IMR-90 (cell line): ENCODE measurements at regions of chr7 and their contacts with region 1.

Region 1: GRCh38 chr7:125061776-125062397 is 132.3 kb upstream of the POT1 start:
- DNase-seq: peak; percentile 41
- ATAC-seq: peak; percentile 29; the same call in 1 of the 2 replicates
- H3K4me3 ChIP-seq: no peak overlapping the region
- H3K27ac ChIP-seq: no peak overlapping the region
- H3K4me1 ChIP-seq: peaks cover 5% of the 10 kb centered on the region; the same call in 1 of the 2 replicates
- H3K27me3 ChIP-seq: no peaks in the 10 kb centered on the region
- CTCF ChIP-seq: no peak
- POLR2A ChIP-seq: no peak
- RAD21 ChIP-seq: no peak

Region 2: DNA sequence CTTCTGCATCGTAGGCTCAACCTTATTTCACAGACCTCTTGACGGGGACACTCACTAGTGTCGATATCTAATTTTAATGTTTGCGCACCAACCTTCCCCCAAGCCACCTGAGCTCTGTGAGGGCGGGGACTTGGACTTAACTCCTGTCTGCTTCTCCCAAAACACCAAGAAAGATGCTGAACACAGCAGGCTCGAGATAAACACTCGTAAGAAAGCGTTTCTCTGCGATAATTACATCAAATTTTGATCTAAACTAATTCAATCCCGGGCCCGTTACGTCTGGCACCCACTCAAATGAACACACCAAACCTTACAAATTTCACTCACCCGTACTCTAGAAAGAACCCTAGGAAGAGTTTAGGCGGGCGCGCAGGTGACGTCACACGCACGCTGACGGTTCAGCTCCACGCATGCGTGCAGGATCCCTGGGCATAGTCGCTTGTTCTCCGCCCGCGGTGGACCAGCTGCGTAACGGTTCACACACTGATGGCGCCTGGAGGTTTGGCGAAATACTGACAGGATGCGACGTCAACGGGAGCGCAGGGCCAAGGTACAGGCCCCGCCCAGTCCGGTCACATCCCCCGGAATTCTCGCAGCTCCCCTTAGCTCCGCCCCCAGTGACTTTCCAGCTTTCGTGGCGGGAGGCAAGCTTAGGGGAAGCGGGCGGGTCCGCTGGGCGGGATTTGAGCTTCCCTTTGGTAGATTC is 132.3 kb before region 1 on chr7 and contains the start of gene POT1:
- CTCF ChIA-PET with region 1: interaction called, 3 read pairs
- POLR2A ChIA-PET with region 1: no interaction called
- dilution Hi-C with region 1: no loop called
- in situ Hi-C with region 1: no loop called
- intact Hi-C with region 1: loop called (anchors 1 kb)
- DNase-seq: peak; percentile 100
- ATAC-seq: peak; percentile 100
- H3K4me3 ChIP-seq: peak within 1 kb of the TSS; percentile 79
- H3K27ac ChIP-seq: peak within 1 kb of the TSS; percentile 56
- H3K4me1 ChIP-seq: no peaks in the 10 kb centered on the region
- H3K27me3 ChIP-seq: no peaks in the 10 kb centered on the region
- CTCF ChIP-seq: no peak
- POLR2A ChIP-seq: peak; percentile 67
- RAD21 ChIP-seq: no peak
- total RNA-seq, gene POT1: 28.5 and 30.6 TPM in 2 replicates

Region 3: DNA sequence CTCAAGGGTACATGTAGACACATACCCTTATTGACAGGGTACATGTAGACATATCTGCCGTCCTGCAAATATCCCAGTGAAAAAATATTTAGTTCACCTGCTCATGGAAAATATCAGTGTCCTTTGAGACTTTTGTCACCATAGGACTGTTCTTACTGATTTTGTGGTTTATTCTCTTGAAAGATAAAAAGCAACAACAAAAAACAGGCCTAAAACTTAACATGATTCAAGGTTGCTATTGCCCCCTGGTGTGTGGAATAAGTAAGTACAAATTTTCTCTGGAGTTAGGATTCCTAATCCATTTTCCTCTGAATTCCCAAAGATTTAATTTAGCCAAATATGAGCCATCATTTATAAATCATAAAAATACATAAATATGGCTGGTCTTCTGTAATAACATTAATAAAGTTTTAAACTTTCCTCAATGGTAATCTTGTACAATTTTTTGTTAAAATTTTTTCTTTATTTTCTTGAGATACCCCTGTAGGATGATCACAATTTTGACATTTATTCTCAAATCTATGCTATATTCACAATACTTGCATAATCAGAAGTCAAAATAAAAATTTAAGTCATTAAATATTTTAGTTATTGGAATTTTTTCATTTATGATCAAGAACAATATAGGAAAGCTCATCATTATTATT is 609.2 kb after region 1 on chr7:
- CTCF ChIA-PET with region 1: no interaction called
- POLR2A ChIA-PET with region 1: no interaction called
- dilution Hi-C with region 1: no loop called
- in situ Hi-C with region 1: no loop called
- intact Hi-C with region 1: loop called (anchors 5 kb)
- DNase-seq: no peak
- ATAC-seq: no peak
- H3K4me3 ChIP-seq: no peak overlapping the region
- H3K27ac ChIP-seq: no peak overlapping the region
- H3K4me1 ChIP-seq: no peaks in the 10 kb centered on the region
- H3K27me3 ChIP-seq: no peaks in the 10 kb centered on the region
- CTCF ChIP-seq: peak; percentile 36
- POLR2A ChIP-seq: no peak
- RAD21 ChIP-seq: no peak; the same call in 1 of the 2 replicates